ENCODE measurements at regions of chr10 and their contacts with region 1.

Region 1: DNA sequence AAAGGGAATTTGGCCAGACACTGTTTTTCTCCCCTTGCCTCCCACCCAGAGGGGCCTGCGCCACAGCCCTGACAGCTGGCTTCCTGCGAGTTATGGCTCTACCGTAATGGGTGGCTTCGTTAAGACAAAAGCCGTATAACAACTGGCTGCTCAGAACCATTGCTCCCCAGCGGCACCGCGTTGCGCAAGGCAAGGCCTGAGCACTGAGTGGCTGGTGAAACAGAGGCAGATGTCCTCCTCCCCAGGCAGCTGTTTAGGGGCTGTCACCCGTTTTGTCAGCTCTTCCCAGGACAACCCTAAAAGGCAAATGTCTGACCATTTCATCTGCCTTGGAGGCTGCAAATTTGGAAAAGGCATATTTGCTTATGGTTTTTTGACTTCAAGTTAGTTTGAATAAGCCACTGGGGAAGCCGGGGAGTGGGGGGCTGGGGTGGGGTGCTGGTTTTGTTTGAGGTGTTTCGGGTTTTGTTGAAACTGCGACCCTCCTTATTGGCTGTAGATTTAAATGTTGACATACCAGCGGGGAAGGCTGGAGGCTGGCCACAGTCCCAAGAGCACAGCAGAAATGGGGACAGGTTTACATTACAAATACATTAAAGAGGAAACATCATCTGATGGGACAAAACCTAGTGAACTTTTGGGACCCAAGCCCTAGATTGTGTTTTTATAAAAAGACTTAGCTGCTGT is 681 bp upstream of the SPOCK2 start:
- DNase-seq: peak in 1 of 2 donors; percentile 78
- ATAC-seq: peak; percentile 33 to 43 (median 41)
- H3K4me3 ChIP-seq: peak overlapping the region; percentile 80
- H3K4me3 Mint-ChIP-seq: peak overlapping the region; percentile 99
- H3K27ac ChIP-seq: peak overlapping the region; percentile 89
- H3K27ac Mint-ChIP-seq: peak overlapping the region; percentile 94 to 96
- H3K4me1 ChIP-seq: peaks cover 46% of the 10 kb centered on the region
- H3K4me1 Mint-ChIP-seq: peaks cover 47 to 52% of the 10 kb centered on the region in 2 donors
- H3K27me3 ChIP-seq: no peaks in the 10 kb centered on the region
- H3K27me3 Mint-ChIP-seq: peaks cover 0 to 3% of the 10 kb centered on the region in 2 donors
- CTCF ChIP-seq: no peak

Region 2: DNA sequence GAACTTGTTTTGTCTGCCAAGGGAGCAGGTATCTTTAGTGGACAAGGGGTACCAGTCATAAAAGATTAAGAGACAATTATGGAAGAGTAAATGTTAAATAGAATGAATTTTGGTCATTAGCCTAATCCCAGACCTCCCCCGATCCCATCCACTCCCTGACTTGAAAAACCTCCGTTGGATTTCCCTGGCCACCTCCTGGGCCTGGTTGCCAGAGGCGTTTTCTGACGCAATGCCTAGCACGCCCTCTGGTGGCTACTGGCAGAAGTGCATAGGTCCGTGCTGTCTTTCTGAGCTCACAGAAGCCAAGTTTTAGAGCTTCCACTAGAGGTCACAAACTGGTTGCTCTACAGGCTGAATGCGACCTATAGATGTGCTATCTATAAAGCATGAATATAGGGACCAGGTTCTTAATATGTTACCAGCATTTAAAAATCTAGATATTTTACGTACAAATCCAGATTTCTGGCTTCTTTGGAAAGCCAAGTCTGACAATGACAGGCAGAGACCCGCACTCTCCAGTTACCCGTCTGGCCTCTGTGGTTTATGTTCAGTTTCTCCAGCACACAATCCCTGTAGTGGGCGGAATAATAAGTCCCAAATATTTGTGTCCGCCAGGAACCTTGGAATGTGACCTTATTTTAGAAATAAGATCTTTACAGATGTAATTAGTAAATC is 40.4 kb before region 1 on chr10:
- intact Hi-C with region 1: loop called (anchors 5 kb)
- DNase-seq: peak; percentile 85 to 96
- ATAC-seq: peak; percentile 95 to 99 (median 98)
- H3K4me3 ChIP-seq: no peak overlapping the region
- H3K4me3 Mint-ChIP-seq: no peak overlapping the region
- H3K27ac ChIP-seq: no peak overlapping the region
- H3K27ac Mint-ChIP-seq: peak overlapping the region in 1 of 2 donors; percentile 46
- H3K4me1 ChIP-seq: no peaks in the 10 kb centered on the region
- H3K4me1 Mint-ChIP-seq: peaks cover 6 to 7% of the 10 kb centered on the region in 2 donors
- H3K27me3 ChIP-seq: no peaks in the 10 kb centered on the region
- H3K27me3 Mint-ChIP-seq: no peaks in the 10 kb centered on the region
- CTCF ChIP-seq: peak; percentile 99

Region 3: DNA sequence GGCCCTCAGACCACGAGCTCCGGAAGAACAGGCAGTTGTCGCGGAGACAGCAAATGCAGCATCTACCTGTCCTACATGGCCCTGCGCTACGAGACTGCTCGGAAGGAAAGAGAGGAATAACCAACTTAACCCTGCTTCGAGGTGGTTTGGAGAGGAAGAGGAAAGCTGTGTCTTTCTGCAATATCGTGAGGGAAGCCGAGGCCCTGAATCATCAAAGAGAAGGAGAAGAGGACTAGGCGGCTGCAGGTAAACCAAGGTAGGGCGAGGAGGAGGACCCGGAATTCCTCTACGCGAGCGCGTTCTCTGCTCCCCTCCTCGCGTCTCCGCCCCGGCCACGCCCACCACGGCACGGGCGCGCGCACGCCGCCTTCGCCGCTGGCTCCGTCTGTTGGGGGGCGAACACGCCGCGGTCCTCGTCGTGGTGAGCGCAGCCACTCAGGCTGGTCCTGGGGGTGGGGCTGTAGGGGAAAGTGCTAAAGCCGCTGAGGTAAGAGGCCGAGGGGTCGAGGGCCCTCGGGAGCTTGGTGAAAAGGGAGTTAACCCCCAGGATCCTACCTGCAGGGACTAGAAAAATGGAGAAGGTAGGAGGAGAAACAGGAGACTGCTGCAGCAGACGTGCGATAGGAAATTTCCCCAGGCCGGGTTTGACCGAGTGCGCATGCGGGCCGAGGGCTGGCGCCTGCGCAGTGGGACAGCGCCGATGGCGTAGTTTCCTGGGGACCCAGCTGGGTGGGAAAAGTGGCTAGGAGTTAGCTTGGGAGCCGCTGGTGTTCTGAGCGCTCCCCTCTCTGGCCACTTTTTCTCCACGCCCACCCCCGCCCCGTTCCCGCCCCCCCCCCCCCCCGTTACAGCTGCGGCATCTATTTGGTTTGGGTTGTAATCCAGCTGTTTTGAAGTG is 126.9 kb after region 1 on chr10 and contains the starts of genes ANAPC16 and ASCC1:
- intact Hi-C with region 1: loop called (anchors 5 kb)
- DNase-seq: peak; percentile 95 to 96
- ATAC-seq: peak; percentile 93 to 97 (median 93)
- H3K4me3 ChIP-seq: peak within 1 kb of the TSS; percentile 66
- H3K4me3 Mint-ChIP-seq: peak within 1 kb of the TSS; percentile 97
- H3K27ac ChIP-seq: peak within 1 kb of the TSS; percentile 93
- H3K27ac Mint-ChIP-seq: peak within 1 kb of the TSS; percentile 98 to 100
- H3K4me1 ChIP-seq: peaks cover 28% of the 10 kb centered on the region
- H3K4me1 Mint-ChIP-seq: peaks cover 20 to 45% of the 10 kb centered on the region in 2 donors
- H3K27me3 ChIP-seq: no peaks in the 10 kb centered on the region
- H3K27me3 Mint-ChIP-seq: no peaks in the 10 kb centered on the region
- CTCF ChIP-seq: no peak
- total RNA-seq, gene ANAPC16: 70.9 to 77.0 (median 71.0) TPM
- total RNA-seq, gene ASCC1: 26.0 to 35.2 (median 29.3) TPM